ENCODE measurements at regions of chr1 and their contacts with region 1.

Region 1: GRCh38 chr1:163959622-163960021 is 599.4 kb upstream of the PBX1 start:
- DNase-seq: no peak
- ATAC-seq: no peak
- H3K4me3 ChIP-seq: no peak overlapping the region
- H3K27ac ChIP-seq: no peak overlapping the region
- H3K4me1 ChIP-seq: no peaks in the 10 kb centered on the region
- H3K27me3 ChIP-seq: no peaks in the 10 kb centered on the region
- CTCF ChIP-seq: no peak

Region 2: GRCh38 chr1:163628034-163628773 is 331.4 kb before region 1 on chr1:
- intact Hi-C with region 1: loop called (anchors 5 kb)
- DNase-seq: no peak
- ATAC-seq: no peak
- H3K4me3 ChIP-seq: no peak overlapping the region
- H3K27ac ChIP-seq: no peak overlapping the region
- H3K4me1 ChIP-seq: no peaks in the 10 kb centered on the region
- H3K27me3 ChIP-seq: no peaks in the 10 kb centered on the region
- CTCF ChIP-seq: no peak

Region 3: DNA sequence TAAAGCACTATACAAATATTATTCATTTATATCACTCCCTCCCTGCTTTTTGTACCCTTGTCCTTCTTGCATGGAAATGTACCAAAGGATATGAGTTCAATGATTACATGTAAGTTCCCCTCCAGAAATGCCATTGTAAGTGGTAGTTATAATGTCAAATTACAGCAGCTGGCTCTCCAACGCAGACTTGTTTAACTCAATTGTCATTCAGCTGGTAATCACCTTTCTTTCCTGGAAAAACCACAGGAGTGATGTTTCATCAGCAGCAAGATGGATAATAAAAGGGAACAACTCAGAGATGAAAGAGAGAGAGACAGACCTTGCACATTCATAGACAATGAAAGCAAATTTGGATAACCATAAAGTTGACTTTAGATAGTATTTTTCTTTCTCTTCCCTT is 20.8 kb after region 1 on chr1:
- intact Hi-C with region 1: no loop called
- DNase-seq: no peak
- ATAC-seq: no peak
- H3K4me3 ChIP-seq: no peak overlapping the region
- H3K27ac ChIP-seq: no peak overlapping the region
- H3K4me1 ChIP-seq: no peaks in the 10 kb centered on the region
- H3K27me3 ChIP-seq: no peaks in the 10 kb centered on the region
- CTCF ChIP-seq: no peak

Measured in upper lobe of right lung (tissue), 1 donor.